ENCODE measurements at regions of chr15 and their contacts with region 1.

Region 1: DNA sequence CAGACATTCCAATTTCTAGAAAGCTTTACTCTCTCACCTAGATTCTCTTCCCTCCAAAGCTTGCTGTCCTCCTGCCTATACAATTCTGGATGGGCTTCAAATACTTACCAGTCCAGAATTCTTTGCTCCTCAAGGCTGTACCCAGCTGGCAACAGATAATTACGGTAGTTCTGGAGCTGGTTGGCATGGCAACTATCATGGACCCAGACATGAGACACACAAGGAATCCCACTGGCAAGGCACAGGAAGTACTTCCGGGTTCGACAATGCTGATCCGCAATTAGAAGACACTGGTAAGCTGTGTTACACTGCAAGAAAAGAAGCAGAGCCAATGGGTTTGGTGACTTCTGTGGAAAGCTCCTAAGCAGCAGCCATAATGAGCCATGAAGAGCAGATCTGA is 37.9 kb downstream of the TUBGCP4 start:
- DNase-seq: no peak
- H3K4me3 ChIP-seq: no peak overlapping the region
- H3K27ac ChIP-seq: no peak overlapping the region
- H3K4me1 ChIP-seq: no peaks in the 10 kb centered on the region
- H3K27me3 ChIP-seq: no peaks in the 10 kb centered on the region
- CTCF ChIP-seq: no peak

Region 2: GRCh38 chr15:43433165-43433564 is 24.4 kb after region 1 on chr15:
- CTCF ChIA-PET with region 1: no interaction called
- POLR2A ChIA-PET with region 1: no interaction called
- intact Hi-C with region 1: no loop called
- DNase-seq: no peak
- H3K4me3 ChIP-seq: no peak overlapping the region
- H3K27ac ChIP-seq: no peak overlapping the region
- H3K4me1 ChIP-seq: no peaks in the 10 kb centered on the region
- H3K27me3 ChIP-seq: no peaks in the 10 kb centered on the region
- CTCF ChIP-seq: no peak

Region 3: GRCh38 chr15:43749690-43750345 is 341.0 kb after region 1 on chr15:
- CTCF ChIA-PET with region 1: no interaction called
- POLR2A ChIA-PET with region 1: no interaction called
- intact Hi-C with region 1: loop called (anchors 10 kb)
- DNase-seq: no peak
- H3K4me3 ChIP-seq: no peak overlapping the region
- H3K27ac ChIP-seq: no peak overlapping the region
- H3K4me1 ChIP-seq: peaks cover 17% of the 10 kb centered on the region
- H3K27me3 ChIP-seq: no peaks in the 10 kb centered on the region
- CTCF ChIP-seq: no peak

Measured in A673 (cell line).